A673 (cell line): ENCODE measurements at regions of chr1 and their contacts with region 1.

Region 1: DNA sequence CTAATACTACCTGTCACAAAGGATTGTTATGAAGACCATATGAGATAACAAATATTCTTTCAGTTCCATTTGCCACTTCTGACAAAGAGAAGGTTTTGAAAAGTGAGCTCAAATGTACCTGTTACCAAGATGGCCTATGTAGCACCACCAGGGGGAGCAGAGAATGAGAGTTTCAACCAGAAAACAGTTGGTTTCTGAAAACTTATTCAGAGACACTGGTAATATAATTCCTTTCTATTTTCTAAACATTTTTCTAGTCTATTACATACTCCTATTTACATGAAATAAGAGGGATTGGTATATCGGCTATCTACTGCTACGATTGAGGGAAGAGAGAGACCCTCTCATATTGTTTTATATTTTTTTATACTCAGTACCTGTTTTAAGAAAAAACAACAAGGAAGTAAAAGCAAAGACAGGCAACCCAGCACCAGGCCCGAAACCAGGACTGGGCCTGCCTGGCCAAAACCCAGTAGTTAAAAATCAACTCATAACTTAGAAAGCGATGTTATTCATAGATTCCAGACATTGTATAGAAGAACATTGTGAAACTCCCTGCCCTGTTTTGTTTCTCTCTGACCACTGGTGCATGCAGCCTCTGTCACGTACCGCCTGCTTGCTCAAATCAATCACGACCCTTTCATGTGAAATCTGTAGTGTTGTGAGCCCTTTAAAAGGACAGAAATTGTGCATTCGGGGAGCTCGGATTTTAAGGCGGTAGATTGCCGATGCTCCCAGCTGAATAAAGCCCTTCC is 48.3 kb downstream of the IL23R start:
- DNase-seq: peak; percentile 38
- H3K4me3 ChIP-seq: no peak overlapping the region
- H3K27ac ChIP-seq: no peak overlapping the region
- H3K4me1 ChIP-seq: no peaks in the 10 kb centered on the region
- H3K27me3 ChIP-seq: no peaks in the 10 kb centered on the region
- CTCF ChIP-seq: peak; percentile 68

Region 2: DNA sequence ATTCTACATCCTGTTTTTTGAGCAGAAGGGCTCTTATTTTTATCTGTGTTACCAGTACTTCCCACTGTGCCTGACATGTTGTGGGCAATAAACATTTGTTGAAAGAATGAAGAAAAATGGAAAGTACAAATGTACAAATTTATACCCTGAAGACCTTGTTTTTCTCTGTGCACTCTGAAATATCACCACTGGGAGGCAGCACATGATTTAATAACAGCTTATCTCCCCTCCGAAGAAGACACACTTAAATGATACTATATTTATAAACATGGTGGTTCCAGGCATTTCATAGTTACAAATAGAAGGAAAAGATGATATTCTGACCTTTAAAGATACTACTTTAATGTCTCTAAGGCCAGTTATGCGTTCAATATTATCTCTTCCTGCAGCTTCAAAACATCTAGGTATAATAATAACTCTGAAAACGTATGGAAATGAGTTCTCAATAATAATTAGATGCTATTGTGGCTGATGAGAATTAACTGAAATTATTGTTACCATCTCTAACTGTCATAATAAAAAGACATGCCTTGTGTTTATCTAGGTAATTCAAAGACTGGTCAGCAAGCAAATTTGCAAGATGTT is 449.5 kb before region 1 on chr1:
- CTCF ChIA-PET with region 1: interaction called, 12 read pairs
- POLR2A ChIA-PET with region 1: no interaction called
- intact Hi-C with region 1: loop called (anchors 5 kb)
- DNase-seq: peak; percentile 65
- H3K4me3 ChIP-seq: no peak overlapping the region
- H3K27ac ChIP-seq: no peak overlapping the region
- H3K4me1 ChIP-seq: no peaks in the 10 kb centered on the region
- H3K27me3 ChIP-seq: no peaks in the 10 kb centered on the region
- CTCF ChIP-seq: peak; percentile 81

Region 3: DNA sequence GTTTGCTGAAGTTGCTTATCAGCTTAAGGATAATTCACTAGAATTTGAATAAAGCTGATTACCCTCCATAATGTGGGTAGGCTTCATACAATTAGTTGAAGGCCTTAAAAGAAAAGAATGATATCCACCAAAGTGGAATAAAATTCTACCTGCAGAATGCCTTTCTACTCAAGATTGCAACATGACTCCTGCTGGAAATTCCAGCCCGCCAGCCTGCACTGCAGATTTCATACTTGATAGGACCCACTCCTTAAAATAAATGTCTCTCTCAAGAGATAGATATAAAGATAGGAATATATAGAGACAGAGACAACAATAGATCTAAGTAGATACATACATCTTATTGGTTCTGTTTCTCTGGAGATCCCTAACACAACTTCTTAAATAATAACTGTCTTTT is 389.8 kb before region 1 on chr1:
- CTCF ChIA-PET with region 1: no interaction called
- POLR2A ChIA-PET with region 1: interaction called, 13 read pairs
- intact Hi-C with region 1: no loop called
- DNase-seq: no peak
- H3K4me3 ChIP-seq: no peak overlapping the region
- H3K27ac ChIP-seq: no peak overlapping the region
- H3K4me1 ChIP-seq: no peaks in the 10 kb centered on the region
- H3K27me3 ChIP-seq: peaks cover 3% of the 10 kb centered on the region
- CTCF ChIP-seq: no peak

Region 4: DNA sequence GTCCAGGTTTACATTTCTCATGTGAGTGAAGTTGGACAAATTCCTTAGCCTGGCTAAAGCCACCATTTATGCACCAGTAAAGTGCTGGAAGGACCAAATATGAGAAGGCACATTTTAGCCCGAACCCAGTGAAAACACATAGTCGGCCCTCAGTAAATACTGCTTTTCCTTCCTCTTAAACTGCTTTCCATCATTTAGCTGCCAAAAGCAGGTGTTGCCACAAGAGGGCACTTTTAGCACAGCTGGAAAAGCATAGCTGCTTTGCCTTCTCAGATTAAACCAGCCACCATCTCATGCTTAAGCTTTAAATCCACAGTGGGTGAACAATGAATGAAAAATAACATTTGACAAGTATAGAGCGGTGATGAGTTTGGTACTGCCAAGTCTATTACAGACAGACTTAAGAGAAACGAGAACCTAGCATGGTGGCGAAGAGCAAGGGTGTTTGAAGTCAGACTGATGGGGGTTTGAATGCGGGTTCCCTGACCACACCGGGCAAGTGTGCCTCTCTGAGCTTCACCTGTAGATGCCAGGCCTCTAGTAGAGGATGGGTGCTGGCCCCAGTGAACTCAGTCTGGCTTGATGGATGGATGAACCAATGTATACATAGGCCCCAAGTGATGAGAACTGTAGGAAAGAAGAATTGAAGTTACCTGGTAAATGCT is 218.4 kb before region 1 on chr1:
- CTCF ChIA-PET with region 1: interaction called, 4 read pairs
- POLR2A ChIA-PET with region 1: no interaction called
- intact Hi-C with region 1: loop called (anchors 5 kb)
- DNase-seq: peak; percentile 81
- H3K4me3 ChIP-seq: no peak overlapping the region
- H3K27ac ChIP-seq: no peak overlapping the region
- H3K4me1 ChIP-seq: no peaks in the 10 kb centered on the region
- H3K27me3 ChIP-seq: no peaks in the 10 kb centered on the region
- CTCF ChIP-seq: peak; percentile 86

Region 5: DNA sequence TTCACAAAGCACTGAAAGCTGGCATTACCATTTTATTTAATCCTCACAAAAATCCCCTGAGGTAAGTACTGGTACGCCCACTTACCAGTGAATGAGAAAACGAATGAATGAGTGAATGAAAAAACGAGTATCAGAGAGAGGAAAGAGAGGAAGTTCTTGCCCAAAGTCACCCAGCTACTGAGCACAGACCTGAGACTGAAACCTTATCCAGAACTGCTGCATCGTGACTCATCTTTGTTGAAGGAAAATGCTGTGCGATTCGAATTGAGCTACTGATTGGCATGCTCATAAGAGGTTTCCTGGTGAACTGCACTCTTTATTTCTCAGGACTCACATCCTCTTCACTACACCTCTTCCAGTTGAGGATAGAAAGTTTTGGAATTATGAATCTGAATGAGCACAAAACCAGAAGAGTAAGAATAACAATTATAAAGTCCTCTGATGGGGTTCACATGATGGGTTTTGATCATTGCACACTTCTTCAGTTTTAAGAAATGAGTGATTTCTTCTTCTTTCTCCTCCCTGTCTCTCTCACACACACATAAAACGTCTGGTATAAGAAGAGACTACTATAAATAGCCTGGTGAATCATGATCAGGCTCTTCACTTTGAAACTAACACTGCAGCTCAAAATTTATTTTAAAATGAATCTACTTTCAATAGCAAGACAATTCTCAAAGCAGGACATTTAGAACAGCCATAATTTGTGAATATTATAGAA is 125.2 kb after region 1 on chr1:
- CTCF ChIA-PET with region 1: no interaction called
- POLR2A ChIA-PET with region 1: interaction called, 10 read pairs
- intact Hi-C with region 1: no loop called
- DNase-seq: no peak
- H3K4me3 ChIP-seq: no peak overlapping the region
- H3K27ac ChIP-seq: no peak overlapping the region
- H3K4me1 ChIP-seq: no peaks in the 10 kb centered on the region
- H3K27me3 ChIP-seq: no peaks in the 10 kb centered on the region
- CTCF ChIP-seq: no peak